Left cardiac atrium (tissue), 4 donors: ENCODE measurements at regions of chr6 and their contacts with region 1.

Region 1: DNA sequence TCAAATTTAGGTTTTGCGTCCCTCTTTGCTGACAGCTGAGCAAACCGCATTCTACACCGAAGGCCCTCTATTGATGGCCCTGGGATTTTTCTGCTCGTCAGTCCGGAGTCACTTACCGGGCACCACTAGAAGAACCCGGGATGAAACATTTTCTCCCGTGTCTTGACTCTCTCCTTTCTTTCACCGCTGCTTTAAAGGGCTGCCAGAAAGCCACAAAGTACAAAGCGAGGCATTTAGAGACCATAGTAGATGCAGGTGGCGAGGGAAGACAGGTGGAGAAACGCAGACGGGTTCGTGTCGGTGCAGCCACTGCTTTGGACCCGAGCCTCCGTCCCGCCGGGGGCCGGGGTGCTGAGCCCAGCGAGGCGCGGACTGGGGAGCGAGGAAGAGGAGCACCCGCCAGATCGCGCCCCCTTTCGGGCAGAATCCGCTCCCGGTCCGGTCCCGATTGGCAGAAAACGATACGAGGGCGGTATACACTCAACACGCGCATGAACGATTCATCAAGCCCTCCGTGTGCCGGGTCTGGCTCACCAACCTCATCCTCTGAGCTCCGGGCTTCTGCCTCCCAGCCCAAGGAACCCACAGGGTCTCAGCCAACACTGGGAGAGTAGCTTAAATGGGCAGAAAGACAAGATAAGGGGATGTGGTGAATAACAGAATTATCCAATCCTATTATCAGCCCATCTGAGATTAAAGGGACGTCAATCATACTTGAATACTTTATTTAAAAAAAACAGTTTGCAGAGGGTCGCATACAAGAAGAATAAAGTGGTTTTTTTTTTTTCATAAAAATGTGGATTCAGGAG is 84.9 kb downstream of the TRIM27 start:
- DNase-seq: peak; percentile 87
- ATAC-seq: peak; percentile 90 to 93

Region 2: GRCh38 chr6:27757307-27757706 is 1081.5 kb before region 1 on chr6:
- intact Hi-C with region 1: no loop called
- DNase-seq: peak; percentile 30
- ATAC-seq: no peak

Region 3: DNA sequence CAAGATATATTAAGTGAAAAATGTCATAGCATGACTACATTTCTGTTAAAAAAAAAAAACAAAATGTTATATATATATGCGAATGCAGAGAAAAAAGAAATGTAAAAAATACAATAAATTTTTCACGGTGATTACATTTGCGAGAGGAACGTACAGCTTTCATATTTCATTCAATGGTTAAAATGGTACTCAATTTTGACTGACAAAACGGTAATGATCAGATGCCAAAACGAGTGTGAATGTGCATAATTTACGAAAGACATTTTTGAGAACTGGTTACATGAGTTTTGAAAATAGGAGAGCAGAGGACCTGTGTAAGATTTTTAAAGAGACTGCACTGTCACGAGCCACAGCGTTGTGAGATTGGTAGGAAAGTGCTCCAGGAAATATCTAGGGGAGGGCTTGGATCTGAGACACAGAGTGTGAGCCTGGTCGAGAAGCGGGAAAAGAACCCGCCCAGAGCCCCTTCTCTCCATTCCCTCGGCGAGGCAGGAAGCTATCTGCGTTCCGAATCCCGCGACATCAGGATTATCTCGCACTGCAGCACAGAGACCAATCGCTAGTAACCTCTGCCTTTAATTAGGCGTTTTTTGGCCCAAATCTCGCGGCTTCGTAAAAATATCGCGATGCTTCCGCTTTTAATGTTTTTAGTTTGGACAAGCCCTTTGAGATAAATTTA is 56.4 kb after region 1 on chr6:
- intact Hi-C with region 1: loop called in 1 of 2 experiments (anchors 5 kb)
- DNase-seq: peak; percentile 93
- ATAC-seq: peak; percentile 89 to 93

Region 4: DNA sequence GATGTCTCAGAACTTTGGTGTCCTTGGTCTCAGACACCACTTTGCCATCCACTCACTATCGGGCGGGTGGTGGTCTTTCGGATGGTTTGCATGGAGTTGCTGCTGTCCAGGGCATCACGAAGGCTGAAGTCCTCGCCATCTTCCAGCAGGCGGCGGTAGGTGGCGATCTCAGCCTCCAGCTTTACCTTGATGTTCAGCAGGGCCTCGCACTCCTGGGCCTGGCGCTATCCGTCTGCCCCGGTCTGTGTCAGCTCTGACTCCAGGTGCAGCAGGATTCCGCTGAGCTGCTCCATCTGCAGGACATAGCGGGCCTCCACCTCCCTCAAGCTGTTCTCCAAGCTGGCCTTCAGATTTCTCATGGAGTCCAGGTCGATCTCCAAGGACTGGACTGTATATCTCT is 130.3 kb after region 1 on chr6:
- intact Hi-C with region 1: no loop called
- DNase-seq: no peak
- ATAC-seq: no peak

Region 5: GRCh38 chr6:28981833-28982475 is 143.1 kb after region 1 on chr6:
- intact Hi-C with region 1: loop called in 1 of 2 experiments (anchors 10 kb)
- DNase-seq: peak; percentile 79
- ATAC-seq: peak; percentile 85

Region 6: GRCh38 chr6:29016559-29017427 is 178.0 kb after region 1 on chr6:
- intact Hi-C with region 1: loop called (anchors 2 to 5 kb)
- DNase-seq: peak; percentile 78
- ATAC-seq: peak; percentile 87 to 95